ENCODE measurements at regions of chr20 and their contacts with region 1.

Region 1: DNA sequence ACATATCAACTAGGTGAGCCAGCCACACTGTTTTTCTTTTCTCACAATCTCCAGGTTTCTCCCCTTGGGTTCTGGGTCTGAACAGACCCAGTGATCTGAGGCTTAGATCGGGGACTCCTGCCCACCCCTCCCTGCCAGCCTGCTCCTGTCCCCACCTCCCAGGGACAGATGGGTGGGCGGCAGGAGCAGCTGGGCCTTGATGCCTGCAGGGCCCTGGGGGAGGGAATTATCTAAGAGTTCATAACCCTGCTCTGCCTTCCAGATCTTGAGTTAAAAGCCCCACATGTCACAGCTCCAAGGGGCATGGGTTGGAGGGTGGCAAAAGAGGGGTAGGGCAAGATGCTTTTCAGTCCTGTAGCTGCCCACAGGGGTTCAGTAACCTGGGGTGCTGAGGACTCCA is 5.2 kb upstream of the XKR7 start:
- DNase-seq: no peak
- ATAC-seq: no peak
- H3K4me3 ChIP-seq: no peak overlapping the region
- H3K27ac ChIP-seq: no peak overlapping the region
- H3K4me1 ChIP-seq: no peaks in the 10 kb centered on the region
- H3K27me3 ChIP-seq: peaks cover 84% of the 10 kb centered on the region
- CTCF ChIP-seq: no peak
- POLR2A ChIP-seq: no peak
- RAD21 ChIP-seq: no peak

Region 2: DNA sequence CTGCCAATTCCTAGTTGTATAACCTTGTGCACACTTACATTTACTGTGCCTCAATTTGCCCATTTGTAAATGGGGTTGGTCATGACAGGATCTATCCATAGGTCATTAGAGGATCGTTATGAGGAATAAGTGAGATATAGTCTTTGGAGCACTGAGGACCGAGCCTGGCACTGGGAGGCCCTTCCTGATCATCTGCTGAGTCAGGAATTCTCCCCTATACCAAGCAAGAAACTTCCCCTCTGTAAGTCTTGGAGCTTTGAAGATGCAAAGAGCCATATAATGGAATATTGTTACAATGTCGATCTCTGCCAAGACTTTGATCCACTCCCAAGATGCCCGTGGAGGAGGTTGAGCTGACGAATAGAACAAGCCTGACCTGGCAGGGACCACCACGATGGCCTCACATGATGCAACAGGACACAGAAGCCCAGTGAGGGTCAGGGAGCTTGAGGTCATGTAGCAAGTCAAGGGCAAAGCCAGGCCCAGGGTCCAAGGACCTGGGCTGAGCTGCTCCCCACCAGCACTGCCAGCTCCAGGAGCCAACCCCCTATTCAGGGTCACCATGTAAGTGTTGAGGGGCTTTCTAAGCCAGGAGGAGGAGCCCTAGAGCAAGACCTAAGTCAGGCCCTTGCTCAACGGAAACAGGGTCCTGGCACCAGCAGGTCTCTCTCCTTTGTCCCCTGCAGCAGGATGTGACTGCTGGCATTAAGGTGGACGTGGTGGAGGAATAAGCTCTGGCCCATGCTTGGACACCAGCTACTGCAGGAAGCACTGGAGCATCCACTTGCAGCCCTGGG is 27.6 kb before region 1 on chr20:
- CTCF ChIA-PET with region 1: no interaction called
- POLR2A ChIA-PET with region 1: no interaction called
- RAD21 ChIA-PET with region 1: no interaction called
- intact Hi-C with region 1: no loop called
- DNase-seq: no peak
- ATAC-seq: no peak
- H3K4me3 ChIP-seq: no peak overlapping the region
- H3K27ac ChIP-seq: no peak overlapping the region
- H3K4me1 ChIP-seq: peaks cover 0 to 6% of the 10 kb centered on the region in 2 experiments; a peak in 3 of 4 replicates
- H3K27me3 ChIP-seq: no peaks in the 10 kb centered on the region
- CTCF ChIP-seq: peak in 1 of 3 experiments; percentile 8; a peak in 1 of 6 replicates
- POLR2A ChIP-seq: no peak
- RAD21 ChIP-seq: no peak

Region 3: DNA sequence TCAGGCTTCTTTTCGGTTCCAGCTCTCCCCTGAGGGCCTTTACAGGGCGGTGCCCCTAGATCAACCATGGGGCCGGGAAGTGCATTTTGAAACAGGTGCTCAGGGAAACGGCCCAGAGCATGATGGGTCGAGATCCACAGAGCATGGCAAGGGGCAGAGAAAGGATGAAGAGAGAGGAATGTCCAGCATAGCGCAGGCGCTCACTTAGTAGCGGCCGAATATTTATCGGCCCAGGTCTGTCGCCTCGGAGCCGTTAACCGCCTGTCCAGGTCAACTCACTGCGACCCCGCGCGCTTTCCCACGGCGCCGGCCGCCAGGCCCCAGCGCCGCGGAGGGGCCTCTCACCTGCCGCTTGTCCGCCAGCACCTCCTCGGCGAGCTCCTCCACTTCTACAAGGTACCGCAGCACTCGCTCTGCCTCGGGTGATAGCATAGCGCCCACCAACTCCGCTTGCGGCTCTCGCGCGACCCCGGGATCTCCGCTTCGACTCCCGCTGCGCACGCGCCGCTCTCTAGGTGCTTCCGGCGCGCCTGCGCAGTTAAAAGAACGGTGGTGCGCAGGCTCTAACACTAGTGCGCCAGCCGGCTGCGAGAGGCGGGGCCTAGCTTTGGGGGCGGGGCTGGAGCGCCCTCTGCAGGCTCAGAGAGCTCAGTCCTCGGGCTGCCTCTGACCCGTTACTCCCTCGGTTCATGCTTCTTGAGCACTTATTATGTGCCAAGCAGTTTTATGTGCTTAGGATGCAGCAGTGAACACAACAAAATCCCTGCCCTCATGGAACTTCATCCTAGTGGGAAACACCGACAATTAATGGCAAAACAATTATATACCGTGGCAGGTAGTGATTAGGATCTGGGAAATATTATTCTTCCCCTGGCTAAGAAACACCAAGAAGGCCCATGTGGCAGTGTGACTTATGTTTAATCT is 11.0 kb before region 1 on chr20 and contains the start of gene PDRG1:
- CTCF ChIA-PET with region 1: interaction called, 10 read pairs
- POLR2A ChIA-PET with region 1: no interaction called
- RAD21 ChIA-PET with region 1: interaction called in 1 of 2 experiments, 3 read pairs
- intact Hi-C with region 1: no loop called
- DNase-seq: peak; percentile 88
- ATAC-seq: peak; percentile 99
- H3K4me3 ChIP-seq: peak within 1 kb of the TSS; percentile 70 to 99
- H3K27ac ChIP-seq: peak within 1 kb of the TSS; percentile 52; the same call in 1 of the 2 replicates
- H3K4me1 ChIP-seq: peaks cover 0 to 13% of the 10 kb centered on the region in 2 experiments; a peak in 2 of 4 replicates
- H3K27me3 ChIP-seq: peaks cover 10% of the 10 kb centered on the region; the same call in 1 of the 2 replicates
- CTCF ChIP-seq: peak; percentile 88 to 95 (median 92)
- POLR2A ChIP-seq: peak; percentile 69
- RAD21 ChIP-seq: peak; percentile 93
- total RNA-seq, gene PDRG1: 18.7 TPM

Region 4: DNA sequence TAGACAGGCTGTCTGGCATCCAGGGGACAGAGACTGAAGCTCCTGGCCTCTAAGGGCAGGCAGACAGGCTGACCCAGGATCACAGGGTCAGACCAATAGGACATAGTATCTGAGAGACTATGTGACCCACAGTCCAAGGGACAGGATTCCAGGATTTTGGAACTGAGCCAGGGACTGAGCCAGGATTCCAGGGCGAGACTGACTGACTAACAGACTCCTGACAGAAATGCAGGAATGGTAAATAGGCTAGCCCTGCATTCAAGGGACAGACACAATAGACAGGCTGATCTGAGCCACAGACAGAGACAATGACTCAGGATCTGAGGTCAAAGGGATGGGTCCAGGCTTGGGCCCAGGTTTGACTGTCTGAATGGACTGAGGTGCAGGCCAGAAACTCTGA is 25.0 kb after region 1 on chr20:
- CTCF ChIA-PET with region 1: no interaction called
- POLR2A ChIA-PET with region 1: no interaction called
- RAD21 ChIA-PET with region 1: no interaction called
- intact Hi-C with region 1: no loop called
- DNase-seq: no peak
- ATAC-seq: peak; percentile 25; the same call in 1 of the 2 replicates
- H3K4me3 ChIP-seq: no peak overlapping the region
- H3K27ac ChIP-seq: no peak overlapping the region
- H3K4me1 ChIP-seq: no peaks in the 10 kb centered on the region
- H3K27me3 ChIP-seq: peaks cover 17% of the 10 kb centered on the region
- CTCF ChIP-seq: no peak
- POLR2A ChIP-seq: no peak
- RAD21 ChIP-seq: no peak